PC-3 (cell line): ENCODE measurements at regions of chr3 and their contacts with region 1.

Region 1: DNA sequence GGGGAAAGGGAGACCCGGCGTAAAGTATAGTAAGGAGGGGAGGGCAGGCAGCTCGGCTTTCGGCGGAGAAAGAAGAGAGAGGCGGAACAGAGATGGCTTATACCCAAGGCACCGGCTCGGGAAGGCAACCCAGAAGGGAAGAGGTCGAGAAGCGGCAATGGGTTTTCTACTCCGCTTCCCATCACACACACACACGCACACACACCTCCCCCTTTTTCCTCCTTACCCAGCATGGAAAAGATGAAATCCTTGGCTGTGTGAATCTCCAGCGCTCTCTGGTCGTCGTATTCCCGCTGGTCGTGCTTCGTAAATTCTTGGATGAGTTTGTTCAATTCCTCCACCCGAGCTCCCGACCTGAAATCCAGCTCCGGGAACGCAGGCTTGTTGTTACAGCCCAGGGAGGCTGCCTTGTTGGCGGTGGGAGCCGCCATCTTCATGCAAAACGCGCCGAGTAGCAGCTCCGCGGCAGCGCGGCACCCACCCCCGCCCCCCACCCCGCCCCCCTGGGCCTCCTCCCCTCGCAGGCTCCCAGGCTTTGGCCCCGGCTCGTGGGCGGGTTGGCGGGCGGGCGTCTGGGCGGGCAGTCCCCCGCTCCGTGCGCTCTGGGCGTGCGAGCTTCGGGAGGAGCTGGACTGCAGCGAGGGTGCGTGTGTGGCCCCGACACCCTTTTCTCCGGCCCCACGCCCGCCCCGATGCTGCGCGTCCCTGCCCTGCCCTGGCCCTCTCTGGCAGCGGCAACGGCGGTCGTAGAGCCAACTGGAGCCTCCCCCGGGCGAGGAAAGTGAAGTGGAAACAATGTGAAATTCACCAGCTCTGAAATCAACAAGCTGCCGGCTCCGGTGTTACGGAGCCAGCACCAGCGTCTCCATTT is at the start of gene MB21D2:
- DNase-seq: peak; percentile 83
- ATAC-seq: peak; percentile 72
- H3K4me3 ChIP-seq: peak within 1 kb of the TSS; percentile 99
- H3K27ac ChIP-seq: peak within 1 kb of the TSS; percentile 89
- H3K4me1 ChIP-seq: peaks cover 28% of the 10 kb centered on the region
- H3K27me3 ChIP-seq: no peaks in the 10 kb centered on the region
- CTCF ChIP-seq: no peak
- total RNA-seq, gene MB21D2: 22.5 and 26.0 TPM in 2 replicates

Region 2: DNA sequence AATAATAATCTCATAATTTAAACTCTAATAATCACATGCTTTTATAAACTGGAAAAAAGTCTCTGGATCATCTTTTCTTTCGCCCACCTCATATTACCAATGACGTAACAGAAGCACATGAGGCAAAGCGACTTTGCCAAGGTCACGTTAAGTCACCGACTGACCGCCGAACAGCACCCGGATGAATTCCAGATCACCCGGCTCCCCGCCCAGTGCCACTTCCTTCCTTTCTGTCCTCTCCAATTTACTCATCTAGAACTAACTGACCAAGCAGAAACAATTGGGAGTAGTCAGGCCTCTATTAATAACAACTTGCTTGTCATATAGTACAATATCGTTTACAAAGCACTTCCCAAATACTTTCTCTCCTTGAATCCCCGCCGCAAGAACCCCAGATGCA is 211.4 kb before region 1 on chr3:
- CTCF ChIA-PET with region 1: no interaction called
- POLR2A ChIA-PET with region 1: no interaction called
- intact Hi-C with region 1: no loop called
- DNase-seq: no peak
- ATAC-seq: no peak
- H3K4me3 ChIP-seq: no peak overlapping the region
- H3K27ac ChIP-seq: no peak overlapping the region
- H3K4me1 ChIP-seq: no peaks in the 10 kb centered on the region
- H3K27me3 ChIP-seq: peaks cover 30% of the 10 kb centered on the region; the same call in 1 of the 2 replicates
- CTCF ChIP-seq: no peak

Region 3: DNA sequence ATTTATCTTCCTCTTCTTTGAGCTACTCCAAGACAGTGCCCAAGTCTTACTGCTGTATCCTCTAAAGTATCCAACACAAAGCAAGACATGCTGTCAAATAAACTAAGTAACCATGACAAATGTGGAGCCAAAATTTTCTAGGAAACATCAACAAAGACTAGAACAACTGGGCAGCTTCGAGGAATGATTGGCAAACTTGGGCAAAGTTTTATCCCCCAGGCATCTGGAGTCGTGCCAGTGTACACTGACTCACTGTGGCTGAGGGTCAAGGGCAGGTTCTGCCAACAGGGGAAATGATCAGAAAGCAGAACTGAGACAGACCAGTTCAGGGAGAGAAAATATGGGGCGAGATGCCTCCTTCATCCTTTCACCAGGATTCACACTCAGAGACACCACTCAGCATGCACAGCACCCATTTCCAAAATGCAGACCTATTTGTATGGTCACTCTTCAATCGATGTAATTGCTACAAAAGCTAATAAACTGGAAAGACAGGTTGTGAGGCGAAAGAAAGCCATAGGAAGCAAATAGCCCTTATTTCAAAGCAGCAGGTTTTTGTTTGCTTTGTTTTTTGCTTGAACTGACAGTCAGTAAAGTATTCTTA is 65.7 kb before region 1 on chr3:
- CTCF ChIA-PET with region 1: interaction called, 4 read pairs
- POLR2A ChIA-PET with region 1: interaction called, 6 read pairs
- intact Hi-C with region 1: loop called (anchors 1 kb)
- DNase-seq: peak; percentile 99
- ATAC-seq: peak; percentile 62
- H3K4me3 ChIP-seq: peak overlapping the region; percentile 27; the same call in 1 of the 2 replicates
- H3K27ac ChIP-seq: peak overlapping the region; percentile 75
- H3K4me1 ChIP-seq: peaks cover 54% of the 10 kb centered on the region
- H3K27me3 ChIP-seq: no peaks in the 10 kb centered on the region
- CTCF ChIP-seq: no peak

Region 4: GRCh38 chr3:192906949-192907348 is 10.7 kb before region 1 on chr3:
- CTCF ChIA-PET with region 1: no interaction called
- POLR2A ChIA-PET with region 1: no interaction called
- intact Hi-C with region 1: loop called (anchors 1 kb)
- DNase-seq: peak; percentile 76
- ATAC-seq: peak; percentile 60
- H3K4me3 ChIP-seq: no peak overlapping the region
- H3K27ac ChIP-seq: peak overlapping the region; percentile 83
- H3K4me1 ChIP-seq: peaks cover 63% of the 10 kb centered on the region
- H3K27me3 ChIP-seq: no peaks in the 10 kb centered on the region
- CTCF ChIP-seq: no peak

Region 5: DNA sequence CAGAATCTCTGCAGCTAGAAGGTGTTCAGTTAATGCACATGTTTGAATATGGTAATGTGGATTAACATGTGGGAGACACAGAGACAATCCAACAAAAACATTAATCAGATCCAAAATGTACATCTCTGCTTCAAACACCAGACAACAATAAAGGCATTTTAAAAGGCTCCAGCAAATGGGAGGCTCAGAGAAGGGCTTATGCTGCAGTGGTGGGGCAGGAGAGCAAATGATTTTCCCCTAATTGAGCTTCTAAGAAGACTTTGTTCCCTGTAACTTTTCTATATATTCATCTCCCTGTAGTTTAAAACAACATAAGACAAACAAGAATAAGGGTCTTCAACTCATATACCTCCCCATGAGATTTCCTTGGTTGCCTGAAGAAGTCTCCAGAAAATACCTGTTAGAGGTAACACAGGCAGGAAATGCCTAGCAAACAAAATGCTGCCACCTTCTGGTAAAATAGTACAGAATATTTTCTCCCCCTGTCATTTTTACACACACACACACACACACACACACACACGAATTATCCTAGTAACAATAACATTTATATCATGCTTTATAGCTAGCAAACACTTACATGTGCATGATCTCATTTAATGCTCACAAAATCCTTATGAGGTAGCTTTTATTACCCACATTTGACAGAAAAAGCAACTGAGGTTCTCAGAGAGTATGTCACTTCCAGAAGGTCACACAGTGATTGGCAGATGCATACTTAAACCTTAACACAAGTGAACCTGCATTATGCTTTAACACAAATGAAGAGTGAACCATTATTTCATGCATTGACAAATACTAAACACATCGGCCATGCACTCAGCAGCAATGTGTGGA is 123.4 kb after region 1 on chr3:
- CTCF ChIA-PET with region 1: interaction called, 7 read pairs
- POLR2A ChIA-PET with region 1: no interaction called
- intact Hi-C with region 1: loop called (anchors 1 kb)
- DNase-seq: peak; percentile 81
- ATAC-seq: peak; percentile 89
- H3K4me3 ChIP-seq: no peak overlapping the region
- H3K27ac ChIP-seq: no peak overlapping the region
- H3K4me1 ChIP-seq: no peaks in the 10 kb centered on the region
- H3K27me3 ChIP-seq: no peaks in the 10 kb centered on the region
- CTCF ChIP-seq: peak; percentile 83

Region 6: DNA sequence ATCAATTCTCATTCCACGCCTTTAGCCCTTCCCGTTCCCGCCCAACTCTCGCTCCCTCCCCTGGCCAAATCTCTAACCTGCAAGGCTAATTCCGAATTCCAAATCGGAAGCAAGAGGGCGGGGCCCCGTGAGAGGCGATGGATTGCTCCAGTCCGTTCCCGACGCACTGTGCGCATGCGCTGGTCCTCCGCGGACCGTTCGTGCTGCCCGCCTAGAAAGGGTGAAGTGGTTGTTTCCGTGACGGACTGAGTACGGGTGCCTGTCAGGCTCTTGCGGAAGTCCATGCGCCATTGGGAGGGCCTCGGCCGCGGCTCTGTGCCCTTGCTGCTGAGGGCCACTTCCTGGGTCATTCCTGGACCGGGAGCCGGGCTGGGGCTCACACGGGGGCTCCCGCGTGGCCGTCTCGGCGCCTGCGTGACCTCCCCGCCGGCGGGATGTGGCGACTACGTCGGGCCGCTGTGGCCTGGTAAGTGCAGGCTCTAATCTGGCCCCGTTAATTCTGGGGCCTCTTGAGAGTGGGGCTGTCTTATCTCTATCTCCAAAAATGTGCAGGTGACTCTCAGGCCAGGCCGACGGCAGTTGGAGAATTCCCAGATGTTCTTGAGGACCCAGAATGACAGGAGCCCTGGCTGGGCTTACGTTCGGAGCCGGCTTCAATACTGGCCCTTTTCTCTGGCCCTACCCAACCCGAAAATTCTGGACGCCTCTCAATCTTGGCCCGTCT is 675.5 kb after region 1 on chr3 and contains the start of gene OPA1:
- CTCF ChIA-PET with region 1: no interaction called
- POLR2A ChIA-PET with region 1: no interaction called
- intact Hi-C with region 1: loop called (anchors 5 kb)
- DNase-seq: peak; percentile 99
- ATAC-seq: peak; percentile 83
- H3K4me3 ChIP-seq: peak within 1 kb of the TSS; percentile 97
- H3K27ac ChIP-seq: peak within 1 kb of the TSS; percentile 57
- H3K4me1 ChIP-seq: peaks cover 25% of the 10 kb centered on the region
- H3K27me3 ChIP-seq: no peaks in the 10 kb centered on the region
- CTCF ChIP-seq: peak; percentile 37; the same call in 1 of the 2 replicates
- total RNA-seq, gene OPA1: 68.0 and 93.8 TPM in 2 replicates